Activated T-helper 2 cell treated with anti-CD3 and anti-CD28 coated beads, Interferon-gamma antibody, Interleukin-2, Interleukin-4, amounts not matched to agents 10 μg/mL and 5 μg/mL and 100 μg/mL, durations not matched to agents 14 hours and 24 hours and 36 hours (primary cell): ENCODE measurements at regions of chr19 and their contacts with region 1.

Region 1: GRCh38 chr19:13861732-13862531 is 15.0 kb upstream of the NANOS3 start:
- DNase-seq: peak; percentile 82
- H3K4me3 Mint-ChIP-seq: peak overlapping the region; percentile 91
- H3K27ac Mint-ChIP-seq: peak overlapping the region; percentile 95
- H3K4me1 Mint-ChIP-seq: peaks cover 30% of the 10 kb centered on the region
- H3K27me3 Mint-ChIP-seq: peaks cover 17% of the 10 kb centered on the region

Region 2: GRCh38 chr19:13277104-13277809 is 584.7 kb before region 1 on chr19:
- intact Hi-C with region 1: loop called (anchors 5 kb)
- DNase-seq: peak; percentile 61
- H3K4me3 Mint-ChIP-seq: no peak overlapping the region
- H3K27ac Mint-ChIP-seq: peak overlapping the region; percentile 73
- H3K4me1 Mint-ChIP-seq: peaks cover 14% of the 10 kb centered on the region
- H3K27me3 Mint-ChIP-seq: peaks cover 1% of the 10 kb centered on the region

Region 3: DNA sequence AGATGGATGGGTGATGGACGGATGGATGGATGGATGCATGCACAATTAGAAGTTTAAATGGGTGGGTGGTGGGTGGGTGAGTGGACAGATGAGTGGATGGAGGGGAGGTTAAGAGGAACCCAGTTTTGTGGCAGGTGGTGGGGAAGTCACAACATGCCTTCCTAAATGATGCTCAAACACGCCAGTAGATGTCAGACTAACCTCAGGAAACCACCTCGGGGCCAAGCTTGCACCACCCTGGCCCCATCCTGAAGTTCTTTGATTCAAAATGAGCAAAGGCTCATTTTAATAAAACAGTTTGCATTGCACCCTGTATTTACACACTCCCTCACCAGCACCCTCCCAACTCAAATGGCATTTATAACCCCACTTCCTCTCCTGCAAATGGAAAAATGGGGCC is 264.3 kb before region 1 on chr19:
- intact Hi-C with region 1: loop called (anchors 1 kb)
- DNase-seq: peak; percentile 28
- H3K4me3 Mint-ChIP-seq: no peak overlapping the region
- H3K27ac Mint-ChIP-seq: no peak overlapping the region
- H3K4me1 Mint-ChIP-seq: peaks cover 2% of the 10 kb centered on the region
- H3K27me3 Mint-ChIP-seq: no peaks in the 10 kb centered on the region

Region 4: GRCh38 chr19:13731147-13731964 is 130.6 kb before region 1 on chr19:
- intact Hi-C with region 1: loop called (anchors 5 kb)
- DNase-seq: peak; percentile 93
- H3K4me3 Mint-ChIP-seq: peak overlapping the region; percentile 85
- H3K27ac Mint-ChIP-seq: peak overlapping the region; percentile 98
- H3K4me1 Mint-ChIP-seq: peaks cover 15% of the 10 kb centered on the region
- H3K27me3 Mint-ChIP-seq: no peaks in the 10 kb centered on the region

Region 5: GRCh38 chr19:13784731-13785452 is 77.0 kb before region 1 on chr19:
- intact Hi-C with region 1: loop called (anchors 1 kb)
- DNase-seq: peak; percentile 53
- H3K4me3 Mint-ChIP-seq: no peak overlapping the region
- H3K27ac Mint-ChIP-seq: peak overlapping the region; percentile 51
- H3K4me1 Mint-ChIP-seq: peaks cover 18% of the 10 kb centered on the region
- H3K27me3 Mint-ChIP-seq: no peaks in the 10 kb centered on the region

Region 6: DNA sequence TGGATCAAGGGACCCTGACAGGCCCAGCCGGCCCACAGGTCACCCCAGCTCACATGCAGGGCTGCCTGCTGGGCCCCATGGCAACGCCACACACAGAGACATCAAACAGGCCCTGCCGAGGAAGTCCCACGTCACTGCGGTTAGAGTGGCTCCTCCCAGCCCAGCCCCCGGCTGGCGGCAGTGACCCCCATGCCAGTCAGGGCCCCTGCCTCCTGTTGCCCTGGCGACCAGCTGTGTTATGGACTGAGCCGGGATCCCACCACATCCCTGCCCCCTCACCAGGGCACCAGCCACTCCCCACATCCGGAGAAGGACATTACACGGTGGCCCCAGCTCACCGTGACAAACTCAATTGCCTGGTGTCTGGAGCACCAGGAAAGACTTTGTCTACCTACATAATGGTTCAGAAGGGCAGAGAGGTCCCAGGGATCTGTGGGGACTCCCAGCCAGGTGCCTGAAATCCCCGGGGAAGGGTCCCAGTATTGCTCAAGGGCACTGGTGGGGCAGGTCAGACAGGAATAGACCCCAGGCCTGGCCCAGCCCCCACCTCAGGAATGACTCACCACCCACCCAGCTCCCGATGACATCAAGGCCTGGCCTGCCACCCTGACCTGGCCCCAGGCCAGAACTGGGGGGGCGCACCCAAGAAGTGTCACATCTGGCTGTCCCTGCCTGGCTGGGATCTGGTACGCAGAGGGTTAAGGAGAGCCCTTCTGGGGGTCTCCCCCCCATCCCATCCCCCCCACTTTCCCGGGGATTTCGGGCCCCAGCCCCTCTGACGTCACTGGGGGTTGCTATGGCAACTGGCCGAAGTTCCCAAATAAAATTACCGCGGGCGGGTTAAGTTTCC is 15.2 kb before region 1 on chr19:
- intact Hi-C with region 1: loop called (anchors 1 kb)
- DNase-seq: peak; percentile 96
- H3K4me3 Mint-ChIP-seq: peak overlapping the region; percentile 75
- H3K27ac Mint-ChIP-seq: peak overlapping the region; percentile 99
- H3K4me1 Mint-ChIP-seq: peaks cover 44% of the 10 kb centered on the region
- H3K27me3 Mint-ChIP-seq: no peaks in the 10 kb centered on the region

Region 7: DNA sequence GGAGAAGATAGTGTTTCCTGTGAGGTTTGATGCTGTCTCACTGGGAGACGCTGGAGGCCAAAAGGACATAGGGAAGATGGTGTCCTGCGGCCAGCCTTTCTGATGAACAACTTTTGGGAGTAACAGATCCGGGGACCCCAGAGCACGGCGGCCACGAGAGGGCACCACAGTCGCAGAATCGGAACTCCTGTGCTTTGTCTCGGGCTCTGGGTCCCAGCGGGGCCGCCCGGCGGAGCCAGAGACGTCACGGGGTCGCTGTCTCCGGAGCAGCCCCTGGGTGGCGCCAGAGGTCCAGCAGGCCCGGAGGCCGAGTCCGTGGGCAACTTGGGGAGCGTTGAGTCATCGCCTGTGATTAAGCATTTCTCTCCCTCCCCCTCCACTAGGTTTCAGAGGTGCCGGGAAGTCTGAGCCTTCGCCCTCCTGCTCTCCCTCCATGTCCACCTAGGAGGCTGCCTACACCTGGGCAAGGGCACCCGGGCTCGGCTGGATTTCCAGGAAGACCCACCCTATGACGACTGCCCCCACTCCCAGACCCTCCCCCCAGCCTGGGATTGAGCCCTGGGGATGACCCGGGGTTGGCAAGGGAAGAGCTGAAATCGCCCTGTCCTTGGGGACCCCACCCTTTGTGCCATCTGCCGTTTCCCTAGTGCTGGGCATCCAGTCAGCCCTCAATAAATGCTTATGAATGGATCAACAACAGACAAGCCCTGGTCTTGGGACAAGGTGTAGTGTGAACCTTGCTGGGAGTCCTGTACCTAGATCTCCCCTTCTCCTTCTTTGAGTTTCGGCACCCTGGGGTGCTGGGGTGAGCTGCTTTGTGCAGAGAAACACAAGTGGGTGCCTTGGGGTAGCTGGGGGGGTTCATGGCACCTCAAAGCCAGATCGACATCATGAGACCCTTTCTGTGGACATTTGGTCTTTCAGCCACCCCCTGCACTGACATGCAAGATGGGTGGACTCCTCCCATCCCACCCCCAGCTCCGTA is 18.4 kb after region 1 on chr19:
- intact Hi-C with region 1: no loop called
- DNase-seq: peak; percentile 96
- H3K4me3 Mint-ChIP-seq: peak overlapping the region; percentile 51
- H3K27ac Mint-ChIP-seq: peak overlapping the region; percentile 87
- H3K4me1 Mint-ChIP-seq: peaks cover 24% of the 10 kb centered on the region
- H3K27me3 Mint-ChIP-seq: peaks cover 4% of the 10 kb centered on the region

Region 8: GRCh38 chr19:13942023-13942684 is 80.2 kb after region 1 on chr19:
- intact Hi-C with region 1: no loop called
- DNase-seq: no peak
- H3K4me3 Mint-ChIP-seq: no peak overlapping the region
- H3K27ac Mint-ChIP-seq: no peak overlapping the region
- H3K4me1 Mint-ChIP-seq: no peaks in the 10 kb centered on the region
- H3K27me3 Mint-ChIP-seq: peaks cover 2% of the 10 kb centered on the region

Region 9: GRCh38 chr19:13978347-13978733 is 116.4 kb after region 1 on chr19:
- intact Hi-C with region 1: no loop called
- DNase-seq: no peak
- H3K4me3 Mint-ChIP-seq: no peak overlapping the region
- H3K27ac Mint-ChIP-seq: no peak overlapping the region
- H3K4me1 Mint-ChIP-seq: peaks cover 10% of the 10 kb centered on the region
- H3K27me3 Mint-ChIP-seq: no peaks in the 10 kb centered on the region